ENCODE measurements at regions of chr3 and their contacts with region 1.

Region 1: GRCh38 chr3:11379233-11379823 is 107.1 kb downstream of the ATG7 start:
- DNase-seq: peak; percentile 16
- H3K4me3 Mint-ChIP-seq: no peak overlapping the region
- H3K27ac Mint-ChIP-seq: no peak overlapping the region
- H3K4me1 Mint-ChIP-seq: no peaks in the 10 kb centered on the region
- H3K27me3 Mint-ChIP-seq: no peaks in the 10 kb centered on the region
- CTCF ChIP-seq: no peak

Region 2: GRCh38 chr3:11452885-11453847 is 73.8 kb after region 1 on chr3:
- CTCF ChIA-PET with region 1: no interaction called
- intact Hi-C with region 1: no loop called
- DNase-seq: no peak
- H3K4me3 Mint-ChIP-seq: no peak overlapping the region
- H3K27ac Mint-ChIP-seq: no peak overlapping the region
- H3K4me1 Mint-ChIP-seq: no peaks in the 10 kb centered on the region
- H3K27me3 Mint-ChIP-seq: no peaks in the 10 kb centered on the region
- CTCF ChIP-seq: no peak

Region 3: DNA sequence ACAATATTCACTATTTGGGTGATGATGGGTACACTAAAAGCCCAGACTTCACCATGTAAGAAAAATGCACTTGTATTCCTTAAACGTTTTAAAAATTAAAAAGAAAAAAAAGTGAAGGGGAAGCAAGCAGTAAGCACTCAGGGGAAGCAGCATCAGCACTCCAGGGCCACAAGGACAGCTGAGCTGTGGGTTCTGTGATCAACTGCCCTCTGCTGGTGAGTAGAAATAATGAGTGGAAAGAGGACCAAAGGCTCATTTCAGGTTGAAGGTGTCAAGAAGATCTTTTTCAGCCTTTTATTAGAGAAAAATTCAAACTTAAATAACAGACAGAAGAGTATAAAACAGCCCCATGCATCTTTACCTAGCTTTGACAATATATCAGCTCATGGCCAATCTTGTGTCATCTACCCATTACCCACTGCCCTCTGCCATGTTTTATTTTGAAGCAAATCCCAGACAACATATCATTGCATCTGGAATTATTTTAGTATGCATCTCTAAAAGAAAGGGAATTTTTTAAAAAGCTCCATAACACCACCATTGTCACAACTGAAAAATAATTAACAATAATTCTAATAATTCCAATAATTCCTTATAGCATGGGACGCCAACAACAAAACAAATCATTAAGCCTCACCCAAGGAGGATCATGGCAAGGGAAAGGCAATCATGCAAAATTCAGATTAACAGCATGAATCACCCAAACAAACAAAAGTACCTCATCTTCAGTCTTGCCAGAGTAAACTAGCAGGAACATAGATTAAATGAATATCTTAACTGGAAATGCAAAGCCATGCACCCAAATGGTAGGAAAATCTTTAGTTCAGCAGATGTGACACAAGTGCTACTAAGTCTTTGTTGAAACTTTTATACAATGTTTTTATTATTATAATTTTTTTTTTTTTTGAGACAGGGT is 424.9 kb after region 1 on chr3:
- CTCF ChIA-PET with region 1: no interaction called
- intact Hi-C with region 1: loop called (anchors 1 kb)
- DNase-seq: peak; percentile 43
- H3K4me3 Mint-ChIP-seq: no peak overlapping the region
- H3K27ac Mint-ChIP-seq: no peak overlapping the region
- H3K4me1 Mint-ChIP-seq: peaks cover 8% of the 10 kb centered on the region
- H3K27me3 Mint-ChIP-seq: no peaks in the 10 kb centered on the region
- CTCF ChIP-seq: peak; percentile 70